ENCODE measurements at regions of chr2 and their contacts with region 1.

Region 1: DNA sequence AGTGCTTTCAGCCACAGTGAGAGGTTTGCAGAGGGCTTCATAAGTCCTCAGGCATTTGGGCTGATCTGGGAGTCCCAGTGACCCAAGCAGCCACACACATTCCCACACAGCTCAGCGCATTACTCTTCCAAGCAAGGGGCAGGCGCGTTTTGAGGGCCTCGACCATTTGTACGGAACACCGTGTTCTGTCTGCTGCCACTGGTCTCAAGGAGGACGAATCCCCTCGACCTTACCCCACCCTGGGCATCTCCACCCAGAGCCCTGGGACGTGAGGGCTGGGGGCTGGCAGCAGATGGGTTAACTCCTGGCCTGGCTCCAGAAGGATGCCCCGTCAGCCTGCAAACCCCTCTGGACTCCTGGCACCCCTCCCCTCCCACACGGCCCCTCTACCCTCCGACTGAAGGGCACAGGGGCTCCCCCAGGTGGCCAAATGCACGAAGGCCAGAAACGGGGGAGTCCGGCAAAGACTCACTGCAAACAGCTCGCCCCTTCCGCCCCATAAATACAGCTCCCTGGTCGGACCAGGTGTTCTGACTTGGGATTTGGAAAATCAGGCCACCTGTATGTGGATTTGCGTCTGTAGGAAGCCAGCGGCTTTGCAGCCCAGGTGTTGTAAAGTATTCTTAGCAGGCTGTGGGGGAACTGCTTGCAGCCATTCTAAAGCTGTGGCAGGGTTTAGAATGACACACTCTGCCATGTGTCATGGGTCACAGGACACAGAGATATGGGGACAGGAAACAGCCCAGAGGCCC is 33.6 kb upstream of the PTMA start:
- DNase-seq: no peak
- H3K4me3 ChIP-seq: no peak overlapping the region
- CTCF ChIP-seq: peak; percentile 92

Region 2: GRCh38 chr2:231604685-231605606 is 69.8 kb before region 1 on chr2:
- CTCF ChIA-PET with region 1: interaction called, 414 read pairs
- POLR2A ChIA-PET with region 1: no interaction called
- DNase-seq: peak; percentile 65
- H3K4me3 ChIP-seq: peak overlapping the region; percentile 56
- CTCF ChIP-seq: no peak

Region 3: DNA sequence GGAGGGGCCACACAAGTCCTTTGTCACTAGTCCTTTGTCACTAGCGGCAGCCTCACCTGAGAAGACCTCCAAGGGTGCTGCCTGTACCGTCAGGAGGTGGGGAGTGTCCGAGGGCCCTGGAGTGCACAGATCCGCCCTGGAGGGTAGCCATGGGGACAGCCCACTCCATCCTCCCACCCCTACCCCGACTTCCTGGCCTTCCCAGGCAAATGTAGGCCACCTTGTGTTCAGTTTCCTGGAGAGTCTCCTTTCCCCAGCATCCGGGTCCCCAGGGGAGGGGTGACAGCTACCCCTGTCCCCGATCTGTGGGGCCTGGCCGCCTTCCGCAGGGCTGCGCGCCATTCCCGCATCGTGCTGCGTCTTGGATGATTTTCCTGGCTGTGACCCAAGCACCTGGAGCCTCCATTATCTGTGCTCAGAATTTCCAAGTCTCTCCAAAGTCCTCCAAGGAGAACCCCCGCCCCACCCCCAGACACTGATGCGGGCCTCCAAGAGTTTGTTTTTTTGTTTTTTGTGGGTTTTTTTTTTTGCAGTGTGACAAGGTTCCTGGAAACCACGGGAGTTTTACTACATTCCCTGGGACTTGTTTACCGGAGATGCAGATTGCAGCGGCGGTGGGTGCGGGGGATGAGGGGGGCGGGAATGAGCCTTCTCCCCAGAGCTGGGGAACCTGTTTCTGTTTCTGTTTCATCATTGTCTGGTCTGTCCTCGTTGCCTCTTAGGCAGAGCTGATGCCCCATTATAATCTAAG is 53.5 kb before region 1 on chr2:
- CTCF ChIA-PET with region 1: interaction called, 414 read pairs
- POLR2A ChIA-PET with region 1: no interaction called
- DNase-seq: no peak
- H3K4me3 ChIP-seq: no peak overlapping the region
- CTCF ChIP-seq: no peak

Region 4: GRCh38 chr2:231642631-231643494 is 31.9 kb before region 1 on chr2:
- CTCF ChIA-PET with region 1: interaction called, 133 read pairs
- POLR2A ChIA-PET with region 1: no interaction called
- DNase-seq: peak; percentile 72
- H3K4me3 ChIP-seq: no peak overlapping the region; the same call in 1 of the 2 replicates
- CTCF ChIP-seq: no peak

Region 5: DNA sequence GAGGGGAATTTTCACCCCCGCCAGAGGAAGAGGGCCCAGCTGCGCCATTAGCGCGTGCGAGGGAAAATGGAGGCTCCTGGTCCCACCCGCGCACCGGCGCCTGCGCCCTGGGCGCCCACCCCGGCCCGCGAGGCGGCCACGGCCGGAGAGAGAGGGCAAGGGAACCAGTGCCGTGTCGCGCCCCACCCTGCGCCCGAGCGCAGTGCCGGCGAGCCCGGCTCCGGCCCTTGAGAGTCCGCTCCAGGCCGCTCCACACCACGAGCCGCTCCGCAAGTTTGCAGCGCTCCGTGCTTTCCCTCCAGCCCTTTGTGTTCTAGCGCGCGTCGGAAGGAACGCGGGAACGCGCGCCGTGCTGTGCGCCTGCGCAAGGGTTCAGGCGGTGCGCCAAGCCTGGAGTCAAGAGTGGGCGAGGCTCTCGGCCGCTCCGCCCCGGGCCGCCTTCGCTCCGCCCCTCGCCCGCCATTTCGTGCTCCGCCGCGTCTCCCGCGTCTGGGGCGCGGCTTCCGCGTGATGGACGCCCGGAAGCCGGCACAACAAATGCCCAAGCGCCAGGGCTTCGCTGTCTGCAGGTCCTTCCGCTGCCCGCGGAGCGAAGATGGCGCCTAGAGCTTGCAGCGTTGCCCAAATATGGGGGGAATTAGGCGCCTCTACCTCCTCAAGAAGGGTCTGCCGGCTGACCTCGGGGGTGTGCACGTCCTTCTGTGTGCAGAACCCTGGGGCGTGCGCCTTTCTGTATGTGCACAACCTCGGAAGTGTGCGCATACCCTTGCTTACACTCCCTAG is 12.5 kb before region 1 on chr2:
- CTCF ChIA-PET with region 1: interaction called, 109 read pairs
- POLR2A ChIA-PET with region 1: interaction called, 10 read pairs
- DNase-seq: peak; percentile 61
- H3K4me3 ChIP-seq: peak overlapping the region; percentile 43
- CTCF ChIP-seq: no peak

Region 6: DNA sequence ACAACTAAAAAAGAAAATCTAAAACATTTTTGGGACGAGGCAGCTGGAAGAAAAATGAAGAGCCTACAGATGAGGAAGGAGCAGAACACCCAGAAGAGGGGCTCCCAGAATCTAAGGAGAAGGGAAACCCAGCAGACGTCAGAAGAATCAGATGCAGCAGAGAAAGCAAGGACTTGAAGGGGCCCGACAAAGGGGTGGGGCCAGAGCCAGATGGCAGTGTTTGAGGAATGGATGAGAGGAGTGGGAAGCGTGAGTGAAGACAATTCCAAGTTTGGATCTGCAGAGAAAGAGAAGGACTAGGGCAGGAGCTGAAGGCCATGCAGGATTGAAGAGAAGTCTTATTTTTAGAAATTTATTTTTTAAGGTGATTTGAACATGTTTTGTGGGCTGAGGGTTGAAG is 52.9 kb after region 1 on chr2:
- CTCF ChIA-PET with region 1: interaction called, 41 read pairs
- POLR2A ChIA-PET with region 1: no interaction called
- DNase-seq: no peak
- H3K4me3 ChIP-seq: no peak overlapping the region
- CTCF ChIP-seq: no peak